ENCODE measurements at regions of chr20 and their contacts with region 1.

Region 1: GRCh38 chr20:13261460-13262301 is 40.6 kb downstream of the ISM1 start:
- DNase-seq: peak in 1 of 2 experiments; percentile 40
- H3K4me3 ChIP-seq: no peak overlapping the region
- H3K27ac ChIP-seq: no peak overlapping the region
- H3K4me1 ChIP-seq: no peaks in the 10 kb centered on the region
- H3K27me3 ChIP-seq: no peaks in the 10 kb centered on the region
- CTCF ChIP-seq: peak; percentile 84

Region 2: GRCh38 chr20:13119583-13119982 is 142.1 kb before region 1 on chr20:
- CTCF ChIA-PET with region 1: no interaction called
- POLR2A ChIA-PET with region 1: no interaction called
- intact Hi-C with region 1: loop called (anchors 5 kb)
- DNase-seq: peak in 1 of 2 experiments; percentile 20
- H3K4me3 ChIP-seq: no peak overlapping the region
- H3K27ac ChIP-seq: no peak overlapping the region
- H3K4me1 ChIP-seq: no peaks in the 10 kb centered on the region
- H3K27me3 ChIP-seq: no peaks in the 10 kb centered on the region
- CTCF ChIP-seq: peak; percentile 91

Region 3: DNA sequence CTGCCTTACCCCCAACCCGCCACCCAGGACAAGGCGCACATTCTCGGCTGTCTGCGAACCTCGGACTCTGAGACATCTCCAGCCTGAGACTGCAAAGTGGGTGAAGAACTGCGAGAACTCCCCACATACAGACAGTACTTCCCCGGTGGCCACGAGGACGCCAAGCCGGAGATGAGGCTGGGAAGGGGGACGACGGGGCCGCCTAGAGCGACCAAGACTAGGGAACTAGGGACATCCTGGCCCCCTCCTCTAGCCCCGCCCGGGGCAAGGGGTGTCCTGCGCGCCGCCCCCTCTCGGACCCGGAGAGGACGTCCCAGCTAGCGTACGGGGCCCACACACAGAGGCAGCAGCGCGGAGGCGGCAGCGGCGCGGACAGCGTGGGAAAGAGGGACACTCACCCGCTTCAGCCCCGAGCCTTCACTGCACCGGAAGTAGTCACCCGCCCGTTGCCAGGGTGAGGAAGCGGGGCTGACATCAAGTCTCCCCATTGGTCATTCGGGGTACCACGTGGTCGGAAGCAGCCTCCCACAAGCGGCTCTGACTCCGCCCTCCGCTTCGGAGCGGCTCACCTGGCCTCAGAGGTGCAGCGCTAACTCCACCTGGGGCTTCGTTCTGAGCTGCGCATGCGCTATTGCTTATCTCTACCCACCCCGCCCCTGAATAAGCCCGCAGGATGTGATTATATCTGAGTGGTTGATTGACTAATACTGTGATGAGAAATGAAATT is 377.0 kb after region 1 on chr20 and contains the start of gene TASP1:
- CTCF ChIA-PET with region 1: no interaction called
- POLR2A ChIA-PET with region 1: interaction called, 32 read pairs
- intact Hi-C with region 1: no loop called
- DNase-seq: peak; percentile 97 to 99
- H3K4me3 ChIP-seq: peak within 1 kb of the TSS; percentile 98
- H3K27ac ChIP-seq: peak within 1 kb of the TSS; percentile 74
- H3K4me1 ChIP-seq: peaks cover 18% of the 10 kb centered on the region
- H3K27me3 ChIP-seq: no peaks in the 10 kb centered on the region
- CTCF ChIP-seq: no peak
- total RNA-seq, gene TASP1: 24.9 and 25.9 TPM in 2 replicates

Region 4: GRCh38 chr20:14512811-14513210 is 1251.1 kb after region 1 on chr20:
- CTCF ChIA-PET with region 1: no interaction called
- POLR2A ChIA-PET with region 1: no interaction called
- intact Hi-C with region 1: no loop called
- DNase-seq: no peak
- H3K4me3 ChIP-seq: no peak overlapping the region
- H3K27ac ChIP-seq: no peak overlapping the region
- H3K4me1 ChIP-seq: no peaks in the 10 kb centered on the region
- H3K27me3 ChIP-seq: no peaks in the 10 kb centered on the region
- CTCF ChIP-seq: no peak

Measured in PC-9 (cell line).